OCI-LY7 (cell line): ENCODE measurements at regions of chr9 and their contacts with region 1.

Region 1: DNA sequence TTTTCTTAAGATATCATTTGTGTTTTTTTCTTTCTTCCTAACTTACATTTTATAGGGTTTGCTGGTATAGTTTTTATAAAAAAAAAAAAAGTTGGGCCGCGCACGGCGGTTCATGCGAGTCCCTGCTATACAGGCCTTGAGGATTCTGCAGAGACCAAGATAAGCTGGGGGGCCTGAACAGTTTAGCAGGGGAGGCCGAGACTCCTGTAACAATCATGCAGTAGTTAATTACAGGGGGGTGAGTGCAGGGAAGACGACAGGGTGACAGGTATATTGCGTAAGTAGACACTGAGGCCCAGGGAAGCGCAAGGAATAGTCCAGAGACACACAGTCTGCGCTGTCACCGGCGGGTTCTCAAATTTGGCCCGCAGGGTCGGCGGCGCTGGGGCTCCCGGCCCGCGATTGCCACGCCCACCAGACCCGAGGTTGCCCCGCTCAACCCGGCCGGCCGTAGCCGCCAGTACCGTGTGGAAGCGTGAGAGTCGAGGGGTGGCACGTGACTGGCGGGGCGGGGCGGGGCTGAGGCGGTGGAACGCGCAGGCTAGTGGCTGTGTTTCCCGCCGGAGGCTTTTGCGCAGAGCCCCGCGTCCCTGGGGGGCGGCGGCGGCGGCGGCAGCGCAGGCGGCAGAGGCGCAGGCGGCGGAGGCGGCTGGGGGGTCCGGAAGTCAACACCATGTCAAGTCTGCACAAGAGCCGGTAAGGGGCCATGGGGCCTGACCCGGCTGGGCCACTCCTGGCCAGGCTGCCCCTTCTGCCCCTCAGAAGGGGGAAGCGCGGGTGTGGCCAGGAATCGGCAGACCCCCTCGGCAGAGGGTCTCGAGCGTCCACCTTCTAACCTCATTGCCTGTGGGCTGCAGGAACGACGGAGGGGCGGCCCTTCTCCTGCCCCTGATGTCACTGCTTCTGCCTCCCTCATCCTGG is at the start of gene TBC1D13:
- DNase-seq: peak; percentile 93
- H3K4me3 ChIP-seq: peak within 1 kb of the TSS; percentile 97
- H3K27ac ChIP-seq: peak within 1 kb of the TSS; percentile 80
- H3K4me1 ChIP-seq: peaks cover 42% of the 10 kb centered on the region
- CTCF ChIP-seq: no peak
- total RNA-seq, gene TBC1D13: 14.9 and 18.7 TPM in 2 replicates

Region 2: DNA sequence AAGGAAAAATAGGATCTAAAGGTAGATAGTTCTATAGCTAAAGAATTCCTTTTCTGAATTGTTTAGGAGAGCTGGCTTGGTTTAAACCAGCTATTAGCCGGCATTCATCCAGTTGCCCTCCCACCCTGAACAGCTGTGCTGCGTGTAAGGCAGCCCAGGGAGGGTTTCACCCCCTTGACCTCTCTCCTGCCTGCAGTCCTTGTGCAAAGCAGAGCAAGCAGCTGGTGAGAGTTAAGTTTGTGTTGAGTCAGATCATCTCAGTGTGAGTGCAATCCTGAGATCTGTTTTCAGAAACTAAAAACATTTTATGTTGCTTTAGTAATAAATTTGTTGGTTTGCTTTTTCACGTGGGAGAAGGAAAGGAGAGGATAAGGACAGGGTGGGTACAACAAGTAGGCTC is 705.9 kb before region 1 on chr9:
- CTCF ChIA-PET with region 1: no interaction called
- POLR2A ChIA-PET with region 1: no interaction called
- intact Hi-C with region 1: no loop called
- DNase-seq: no peak
- H3K4me3 ChIP-seq: no peak overlapping the region
- H3K27ac ChIP-seq: no peak overlapping the region
- H3K4me1 ChIP-seq: peaks cover 22% of the 10 kb centered on the region
- CTCF ChIP-seq: no peak

Region 3: DNA sequence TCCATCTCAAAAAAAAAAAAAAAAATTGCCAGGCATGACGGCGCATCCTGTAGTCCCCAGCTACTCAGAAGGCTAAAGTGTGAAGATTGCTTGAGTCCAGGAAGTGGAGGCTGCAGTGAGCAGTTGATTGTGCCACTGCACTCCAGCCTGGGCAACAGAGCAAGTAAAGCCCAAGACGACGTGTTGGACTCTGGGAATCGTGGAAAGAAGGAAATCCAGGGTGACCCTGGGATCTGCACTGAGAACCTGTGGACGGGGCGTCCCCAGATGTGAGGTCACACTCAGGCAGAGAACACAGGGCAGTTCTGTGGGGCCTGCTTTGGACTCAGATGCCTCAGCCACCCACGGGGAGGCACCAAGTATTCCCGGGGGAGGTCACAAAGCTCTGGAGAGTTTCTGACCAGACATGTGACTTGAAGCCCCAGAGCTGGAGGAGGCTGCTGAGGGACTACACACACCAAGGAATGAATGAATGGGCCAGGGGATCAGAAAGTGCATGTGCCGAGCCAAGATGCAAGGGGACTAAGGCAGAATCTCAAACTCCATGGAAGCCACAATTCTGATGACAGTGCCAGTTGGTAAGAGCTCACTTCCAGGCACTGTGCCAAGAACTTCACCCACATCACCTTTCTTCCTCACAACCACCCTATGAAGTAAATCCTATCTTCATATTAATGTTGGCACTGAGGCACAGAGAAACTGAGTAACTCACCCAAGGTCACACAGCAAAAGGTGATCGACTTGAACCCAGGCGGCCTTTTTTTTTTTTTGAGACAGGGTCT is 143.2 kb before region 1 on chr9:
- CTCF ChIA-PET with region 1: no interaction called
- POLR2A ChIA-PET with region 1: interaction called, 3 read pairs
- intact Hi-C with region 1: loop called (anchors 10 kb)
- DNase-seq: peak; percentile 89
- H3K4me3 ChIP-seq: peak overlapping the region; percentile 42
- H3K27ac ChIP-seq: peak overlapping the region; percentile 87
- H3K4me1 ChIP-seq: peaks cover 27% of the 10 kb centered on the region
- CTCF ChIP-seq: no peak

Region 4: GRCh38 chr9:128771745-128772519 is 15.0 kb before region 1 on chr9 and contains the start of gene ZER1:
- CTCF ChIA-PET with region 1: no interaction called
- POLR2A ChIA-PET with region 1: interaction called, 9 read pairs
- intact Hi-C with region 1: loop called (anchors 1 kb)
- DNase-seq: peak; percentile 94
- H3K4me3 ChIP-seq: peak within 1 kb of the TSS; percentile 86
- H3K27ac ChIP-seq: peak within 1 kb of the TSS; percentile 64
- H3K4me1 ChIP-seq: peaks cover 16% of the 10 kb centered on the region
- CTCF ChIP-seq: no peak
- total RNA-seq, gene ZER1: 6.9 and 11.0 TPM in 2 replicates

Region 5: GRCh38 chr9:128861511-128861910 is 74.6 kb after region 1 on chr9:
- CTCF ChIA-PET with region 1: no interaction called
- POLR2A ChIA-PET with region 1: no interaction called
- intact Hi-C with region 1: no loop called
- DNase-seq: no peak
- H3K4me3 ChIP-seq: no peak overlapping the region
- H3K27ac ChIP-seq: no peak overlapping the region
- H3K4me1 ChIP-seq: peaks cover 4% of the 10 kb centered on the region
- CTCF ChIP-seq: no peak